Gastrocnemius medialis (tissue), 4 donors: ENCODE measurements at regions of chr1 and their contacts with region 1.

Region 1: GRCh38 chr1:38990738-38991639 is at the start of gene AKIRIN1:
- DNase-seq: peak; percentile 96 to 98
- ATAC-seq: peak; percentile 95 to 96
- H3K4me3 ChIP-seq: peak within 1 kb of the TSS; percentile 74 to 98 (median 91)
- H3K27ac ChIP-seq: peak within 1 kb of the TSS; percentile 91 to 98 (median 92)
- H3K4me1 ChIP-seq: peaks cover 18 to 21% of the 10 kb centered on the region in 2 donors
- H3K27me3 ChIP-seq: no peaks in the 10 kb centered on the region
- CTCF ChIP-seq: peak in 1 of 5 experiments; percentile 22
- POLR2A ChIP-seq: peak; percentile 95 to 96
- total RNA-seq, gene AKIRIN1: 28.2 to 46.0 (median 34.2) TPM

Region 2: DNA sequence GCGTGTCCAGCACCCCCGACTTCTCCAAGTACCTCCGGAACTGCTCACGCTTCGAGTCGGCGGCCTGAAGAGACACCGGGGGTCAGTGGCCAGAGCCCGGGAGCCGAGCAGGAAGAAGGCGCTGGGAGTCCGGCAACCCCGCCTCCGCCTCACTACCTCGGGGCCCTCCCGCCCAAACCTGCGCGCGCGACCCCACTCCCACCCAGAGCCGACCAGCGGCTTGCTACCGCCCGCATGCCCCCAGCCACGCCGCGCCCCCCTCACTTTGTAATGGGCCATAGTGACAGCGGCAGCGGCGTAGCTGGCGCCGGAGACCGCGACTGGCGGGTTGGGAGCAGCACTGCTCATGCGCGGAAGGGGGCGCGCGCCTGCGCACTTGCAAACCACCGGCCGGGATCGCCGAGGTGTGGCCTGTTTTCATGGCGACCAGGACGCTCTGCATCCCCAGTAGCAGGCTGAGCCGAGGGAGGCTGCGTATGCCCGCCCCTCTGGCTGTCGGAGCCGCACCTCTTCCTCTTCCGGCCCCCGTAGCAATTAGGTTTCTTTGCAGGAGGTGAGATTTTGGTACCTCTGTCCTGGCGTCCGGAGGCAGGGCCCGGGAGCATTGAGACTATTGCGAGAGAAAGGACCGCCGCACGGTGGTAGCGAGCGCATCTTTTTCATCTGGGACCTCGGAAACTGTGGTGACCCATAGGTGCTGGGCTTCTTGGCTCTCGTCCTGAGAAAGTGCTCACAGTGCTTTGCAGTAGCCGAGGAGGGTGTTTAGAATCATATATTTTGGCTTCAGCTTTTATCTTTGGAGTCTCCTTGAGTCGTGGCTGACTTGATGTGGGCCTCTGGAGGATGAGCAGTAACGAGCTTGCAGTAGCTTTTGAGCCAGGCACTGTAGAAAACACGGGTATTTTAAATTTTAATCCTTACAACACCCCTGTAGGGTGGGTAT is 117.7 kb before region 1 on chr1 and contains the start of gene MYCBP:
- in situ Hi-C with region 1: loop called in 1 of 4 experiments (anchors 10 kb)
- intact Hi-C with region 1: loop called (anchors 2 kb)
- DNase-seq: peak; percentile 94 to 95
- ATAC-seq: peak; percentile 98
- H3K4me3 ChIP-seq: peak within 1 kb of the TSS; percentile 69 to 95 (median 73)
- H3K27ac ChIP-seq: peak within 1 kb of the TSS; percentile 69 to 86 (median 77)
- H3K4me1 ChIP-seq: peaks cover 24 to 25% of the 10 kb centered on the region in 2 donors
- H3K27me3 ChIP-seq: no peaks in the 10 kb centered on the region
- CTCF ChIP-seq: peak in 2 of 5 experiments; percentile 22 to 24
- POLR2A ChIP-seq: peak; percentile 25 to 37
- total RNA-seq, gene MYCBP: 9.8 to 22.3 (median 13.5) TPM

Region 3: GRCh38 chr1:39026051-39026865 is 35.3 kb after region 1 on chr1 and contains the start of gene NDUFS5:
- in situ Hi-C with region 1: no loop called
- intact Hi-C with region 1: loop called (anchors 1 kb)
- DNase-seq: peak; percentile 82 to 90
- ATAC-seq: peak; percentile 95 to 96
- H3K4me3 ChIP-seq: peak within 1 kb of the TSS; percentile 68 to 91 (median 80)
- H3K27ac ChIP-seq: peak within 1 kb of the TSS; percentile 91 to 97 (median 94)
- H3K4me1 ChIP-seq: peaks cover 14 to 19% of the 10 kb centered on the region in 2 donors
- H3K27me3 ChIP-seq: no peaks in the 10 kb centered on the region
- CTCF ChIP-seq: peak in 1 of 5 experiments; percentile 15
- POLR2A ChIP-seq: peak; percentile 86 to 95
- total RNA-seq, gene NDUFS5: 603 to 976 (median 911) TPM

Region 4: DNA sequence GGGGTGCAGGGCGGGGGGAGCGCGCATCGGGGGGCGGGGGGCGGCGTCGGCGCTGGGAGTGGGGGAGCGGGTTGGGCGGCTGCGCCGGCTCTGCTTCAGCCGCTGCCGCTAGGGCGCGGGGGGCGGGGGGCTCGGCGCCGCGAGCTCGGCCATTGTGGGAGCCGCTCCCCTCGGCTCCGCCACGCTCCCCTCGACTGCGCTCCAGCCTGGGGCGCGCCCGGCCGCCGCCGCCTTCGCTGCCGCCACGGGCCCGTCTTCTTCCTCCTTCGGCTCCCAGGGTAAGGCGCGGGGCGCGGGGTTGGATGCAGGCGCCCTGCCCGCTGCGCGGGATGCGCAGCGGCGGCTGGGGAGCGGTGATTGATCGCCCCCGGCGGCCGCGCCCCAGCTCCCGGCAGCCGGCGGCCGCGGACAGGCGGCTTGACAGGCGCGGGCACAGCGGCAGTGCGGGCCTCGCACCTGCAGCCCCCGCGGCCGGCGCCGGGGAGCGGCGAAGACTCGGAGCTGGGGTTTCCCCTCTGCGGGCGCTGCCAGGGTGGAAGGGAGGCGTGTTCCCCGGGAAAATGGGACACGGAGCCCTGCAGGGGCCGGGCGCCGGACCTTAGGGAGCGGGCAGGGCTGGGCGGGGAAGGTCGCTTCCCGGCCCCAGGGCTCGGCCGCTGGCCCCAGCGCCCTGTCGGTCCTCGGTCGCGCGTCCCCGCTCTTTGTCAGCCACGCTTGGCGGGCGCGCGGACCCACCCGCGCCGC is 90.4 kb after region 1 on chr1:
- in situ Hi-C with region 1: loop called in 1 of 4 experiments (anchors 10 kb)
- intact Hi-C with region 1: no loop called
- DNase-seq: no peak
- ATAC-seq: peak; percentile 27 to 35
- H3K4me3 ChIP-seq: peak overlapping the region; percentile 45 to 61 (median 53)
- H3K27ac ChIP-seq: no peak overlapping the region
- H3K4me1 ChIP-seq: peaks cover 0 to 5% of the 10 kb centered on the region in 2 donors
- H3K27me3 ChIP-seq: peaks cover 16 to 27% (median 21%) of the 10 kb centered on the region in 3 donors
- CTCF ChIP-seq: peak in 1 of 5 experiments; percentile 14
- POLR2A ChIP-seq: no peak